ENCODE measurements at regions of chr4 and their contacts with region 1.

Region 1: DNA sequence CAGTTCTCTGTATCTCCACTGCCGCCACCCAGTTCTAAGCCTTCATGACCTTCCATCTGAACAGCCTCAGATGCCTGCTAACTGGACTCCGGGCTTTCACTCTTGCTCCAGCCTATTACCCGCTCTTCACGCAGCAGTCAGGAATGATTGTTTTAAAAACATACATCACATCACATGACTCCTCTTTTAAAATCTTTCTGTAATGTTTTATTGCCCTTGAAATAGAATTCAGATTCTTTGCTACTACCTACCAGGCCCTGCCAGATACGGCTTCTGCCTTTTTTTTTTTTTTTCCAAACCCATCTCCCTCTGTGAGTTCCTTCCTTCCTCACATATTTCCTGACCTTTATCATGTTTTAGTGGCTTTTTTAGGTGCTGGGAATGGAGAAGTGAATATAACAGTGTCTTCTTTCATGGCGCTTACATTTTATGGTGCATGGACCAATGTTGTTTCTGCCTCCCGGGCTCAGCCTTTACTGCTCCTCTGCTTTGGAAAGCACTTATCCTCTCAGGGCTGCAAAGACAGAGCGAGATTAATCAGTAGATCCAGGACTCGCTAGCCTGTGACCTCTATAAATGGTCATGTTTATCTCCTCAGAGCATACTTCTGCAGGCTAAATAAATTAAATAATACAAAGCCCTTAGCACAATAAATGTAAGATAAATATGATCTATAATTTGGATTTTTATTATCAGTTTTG is 58.0 kb downstream of the FBXO8 start:
- DNase-seq: no peak
- H3K4me3 ChIP-seq: no peak overlapping the region
- H3K27ac ChIP-seq: no peak overlapping the region
- H3K4me1 ChIP-seq: no peaks in the 10 kb centered on the region
- H3K27me3 ChIP-seq: no peaks in the 10 kb centered on the region
- CTCF ChIP-seq: no peak
- POLR2A ChIP-seq: no peak

Region 2: DNA sequence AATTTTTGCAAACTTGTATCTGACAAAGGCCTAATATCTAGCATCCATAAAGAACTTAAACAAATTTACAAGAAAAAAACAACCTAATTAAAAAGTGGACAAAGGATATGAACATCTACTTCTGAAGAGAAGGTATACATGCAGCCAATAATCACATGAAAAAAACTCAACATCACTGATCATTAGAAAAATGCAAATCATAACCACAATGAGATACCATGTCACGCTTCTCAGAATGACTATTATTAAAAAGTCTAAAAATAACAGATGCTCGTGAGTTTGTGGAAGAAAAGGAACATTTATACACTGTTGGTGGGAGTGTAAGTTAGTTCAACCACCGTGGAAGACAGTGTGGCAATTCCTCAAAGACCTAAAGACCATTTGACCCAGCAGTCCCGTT is 82.2 kb after region 1 on chr4:
- intact Hi-C with region 1: loop called (anchors 5 kb)
- DNase-seq: no peak
- H3K4me3 ChIP-seq: no peak overlapping the region
- H3K27ac ChIP-seq: no peak overlapping the region
- H3K4me1 ChIP-seq: no peaks in the 10 kb centered on the region
- H3K27me3 ChIP-seq: no peaks in the 10 kb centered on the region
- CTCF ChIP-seq: no peak
- POLR2A ChIP-seq: no peak

Region 3: DNA sequence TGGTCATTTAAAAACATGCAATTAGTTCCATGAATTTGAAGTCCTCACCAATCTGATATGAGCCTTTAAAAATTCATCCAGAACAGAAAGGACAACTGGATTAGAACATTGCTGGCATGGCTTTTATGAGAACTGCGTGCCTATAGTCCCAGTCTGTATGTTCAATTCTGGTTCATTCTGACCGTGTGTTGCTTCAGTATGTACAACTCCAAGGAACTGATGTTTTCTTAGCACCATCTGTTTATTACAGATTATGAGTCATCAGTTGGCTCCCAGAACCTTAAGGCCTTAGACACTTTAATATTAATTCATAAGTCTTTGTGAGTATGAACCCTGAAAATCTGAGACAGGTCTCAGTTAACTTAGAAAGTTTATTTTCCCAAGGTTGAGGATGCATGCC is 173.2 kb after region 1 on chr4:
- intact Hi-C with region 1: no loop called
- DNase-seq: no peak
- H3K4me3 ChIP-seq: no peak overlapping the region
- H3K27ac ChIP-seq: no peak overlapping the region
- H3K4me1 ChIP-seq: no peaks in the 10 kb centered on the region
- H3K27me3 ChIP-seq: no peaks in the 10 kb centered on the region
- CTCF ChIP-seq: no peak
- POLR2A ChIP-seq: no peak

Measured in testis (tissue), 5 donors.